ENCODE measurements at regions of chr3 and their contacts with region 1.

Region 1: DNA sequence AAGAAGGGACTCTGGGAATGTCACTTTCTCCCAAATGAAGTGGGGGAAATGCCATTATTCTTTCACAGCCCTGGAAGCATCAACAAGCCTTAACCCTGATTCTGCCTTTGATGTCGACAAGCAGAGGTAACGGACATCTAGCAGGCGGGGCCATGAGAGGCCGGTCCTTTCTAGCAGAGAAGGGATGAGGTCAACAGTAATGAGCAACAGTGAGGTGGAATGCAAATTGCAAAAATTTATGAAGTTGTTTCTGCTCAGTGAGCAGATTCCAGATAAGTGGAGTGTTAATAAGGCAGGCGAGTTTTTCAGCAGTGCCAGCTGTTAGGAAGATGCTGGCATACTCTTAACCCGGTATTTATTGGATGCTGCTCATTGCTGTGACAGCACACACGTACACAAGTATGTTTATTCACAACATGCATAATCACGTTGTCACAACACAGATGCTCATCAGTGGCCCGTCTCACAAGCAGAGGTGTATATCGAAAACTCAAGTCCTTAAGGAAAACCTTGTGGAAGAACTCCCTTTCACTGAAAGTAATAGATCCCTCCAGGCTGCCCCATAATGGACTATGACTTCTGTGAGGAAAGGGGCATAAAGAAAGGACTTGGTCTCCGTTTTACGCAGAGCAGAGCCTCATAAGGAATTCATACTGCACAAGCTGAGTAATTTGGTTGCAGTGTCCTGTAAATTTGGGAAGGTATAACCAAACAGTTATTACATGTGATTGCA is 329.0 kb downstream of the IGSF11 start:
- DNase-seq: no peak
- CTCF ChIP-seq: no peak

Region 2: GRCh38 chr3:118682921-118683320 is 22.7 kb before region 1 on chr3:
- CTCF ChIA-PET with region 1: interaction called, 11 read pairs
- POLR2A ChIA-PET with region 1: no interaction called
- DNase-seq: no peak
- CTCF ChIP-seq: no peak

Region 3: DNA sequence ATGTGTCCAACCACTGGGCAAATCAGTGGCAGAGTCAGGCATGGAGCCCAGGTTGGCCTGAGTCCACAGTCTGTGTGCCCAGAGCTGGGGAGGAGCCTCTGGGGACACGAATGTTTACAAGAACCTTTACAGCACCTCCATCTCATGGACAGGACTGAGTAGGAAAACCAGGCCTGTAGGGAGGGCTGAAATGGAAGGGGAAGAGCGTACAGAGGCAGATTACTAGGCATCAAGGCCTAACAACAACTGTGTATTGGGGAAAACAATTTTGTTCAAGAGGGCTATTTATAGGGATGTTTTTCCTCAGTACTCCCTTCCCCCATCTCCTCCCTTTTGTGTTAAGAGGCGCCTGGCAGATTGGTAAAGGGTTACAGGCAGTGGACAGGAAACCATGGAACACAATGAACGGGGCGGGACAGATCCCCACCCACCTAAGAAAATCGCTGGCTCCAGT is 573.5 kb after region 1 on chr3:
- CTCF ChIA-PET with region 1: no interaction called
- POLR2A ChIA-PET with region 1: no interaction called
- DNase-seq: no peak
- CTCF ChIP-seq: no peak